ENCODE measurements at regions of chr3 and their contacts with region 1.

Region 1: DNA sequence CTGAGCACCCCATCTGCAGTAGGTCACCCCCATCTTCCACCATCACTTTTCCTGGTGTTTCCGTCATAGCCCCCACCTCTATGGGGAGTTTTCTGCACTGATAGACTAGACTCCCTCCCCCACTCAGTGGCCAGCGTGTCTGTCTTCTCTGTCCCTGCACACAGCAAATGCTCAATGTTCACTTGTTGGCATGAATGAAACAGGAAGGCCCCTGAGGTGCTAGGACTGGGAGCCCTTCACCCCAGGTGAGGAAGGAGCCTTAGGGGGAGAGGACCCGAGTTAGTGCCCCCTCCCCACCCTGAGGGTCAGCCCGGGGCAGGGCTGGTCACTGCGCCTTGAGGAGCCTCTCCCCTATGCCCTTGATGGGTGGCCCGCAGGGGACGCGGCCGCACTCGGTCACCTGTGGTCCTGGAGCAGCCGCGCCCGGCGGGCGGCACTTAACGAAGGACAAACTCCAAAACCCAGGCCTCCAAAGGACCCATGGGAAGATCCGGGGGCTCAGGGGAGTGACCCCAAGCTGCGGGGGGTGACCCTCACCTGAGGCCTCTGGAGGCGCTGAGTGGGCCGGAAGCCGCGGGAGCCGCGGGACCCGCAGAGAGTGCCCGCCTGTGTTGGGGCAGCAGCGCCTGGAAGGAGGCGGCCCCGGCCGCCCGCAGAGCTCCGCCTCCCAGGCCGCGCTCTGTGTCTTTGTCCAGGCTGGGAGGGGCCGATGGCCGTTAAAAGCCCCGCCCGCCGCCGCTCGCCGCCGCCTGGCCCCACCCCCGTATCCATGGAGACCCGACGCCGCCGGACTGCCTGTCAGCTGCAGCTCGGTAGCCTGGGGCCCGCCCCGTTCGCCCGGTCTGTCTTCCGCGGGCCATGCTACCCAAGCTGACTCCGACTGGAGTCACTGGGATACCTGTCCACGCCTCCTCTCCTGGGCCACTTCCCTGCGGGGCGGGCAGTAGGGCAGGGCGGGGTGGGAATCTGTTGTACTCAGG is 15.5 kb upstream of the FANCD2 start:
- DNase-seq: peak; percentile 86
- ATAC-seq: peak; percentile 86
- H3K4me3 ChIP-seq: peak overlapping the region in 4 of 5 experiments; percentile 46 to 64 (median 57)
- H3K4me3 Mint-ChIP-seq: peak overlapping the region; percentile 85
- H3K27ac ChIP-seq: no peak overlapping the region
- H3K27ac Mint-ChIP-seq: no peak overlapping the region
- H3K4me1 ChIP-seq: peaks cover 14 to 29% of the 10 kb centered on the region in 2 donors
- H3K4me1 Mint-ChIP-seq: peaks cover 20% of the 10 kb centered on the region
- H3K27me3 ChIP-seq: no peaks in the 10 kb centered on the region
- H3K27me3 Mint-ChIP-seq: no peaks in the 10 kb centered on the region
- CTCF ChIP-seq: no peak

Region 2: DNA sequence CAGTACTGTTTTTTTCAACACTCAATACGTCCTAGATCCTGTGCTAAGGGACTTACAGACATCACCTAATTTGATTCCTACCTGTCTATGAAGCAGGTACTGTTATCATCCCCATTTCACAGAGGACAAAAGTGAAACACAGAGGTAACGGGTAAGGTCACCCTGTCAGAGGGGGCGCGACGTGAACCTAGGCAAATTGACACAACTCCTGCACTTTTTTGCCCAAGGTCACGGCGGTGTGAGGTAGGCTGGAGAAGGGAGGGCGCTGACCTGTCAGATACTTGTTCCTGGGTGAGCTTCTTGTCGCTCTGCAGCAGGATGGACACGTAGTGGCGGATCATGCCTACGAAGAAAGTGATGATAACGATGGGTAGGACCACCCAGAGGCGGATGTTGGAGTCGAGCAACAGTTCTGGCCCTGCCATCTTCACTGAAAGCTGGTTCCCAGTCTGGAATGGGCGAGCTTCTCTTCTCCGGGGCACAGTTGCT is 24.5 kb before region 1 on chr3:
- CTCF ChIA-PET with region 1: no interaction called
- POLR2A ChIA-PET with region 1: interaction called, 7 read pairs
- intact Hi-C with region 1: loop called (anchors 1 kb)
- DNase-seq: no peak
- ATAC-seq: peak; percentile 28
- H3K4me3 ChIP-seq: peak overlapping the region; percentile 71 to 96 (median 82)
- H3K4me3 Mint-ChIP-seq: peak overlapping the region; percentile 98
- H3K27ac ChIP-seq: peak overlapping the region; percentile 88 to 97
- H3K27ac Mint-ChIP-seq: peak overlapping the region; percentile 100
- H3K4me1 ChIP-seq: peaks cover 16 to 22% of the 10 kb centered on the region in 2 donors
- H3K4me1 Mint-ChIP-seq: peaks cover 28% of the 10 kb centered on the region
- H3K27me3 ChIP-seq: no peaks in the 10 kb centered on the region
- H3K27me3 Mint-ChIP-seq: no peaks in the 10 kb centered on the region
- CTCF ChIP-seq: no peak

Region 3: GRCh38 chr3:10026084-10026890 is 15.5 kb after region 1 on chr3 and contains the start of gene FANCD2:
- CTCF ChIA-PET with region 1: no interaction called
- POLR2A ChIA-PET with region 1: interaction called, 3 read pairs
- intact Hi-C with region 1: loop called (anchors 1 kb)
- DNase-seq: peak; percentile 96
- ATAC-seq: peak; percentile 83
- H3K4me3 ChIP-seq: peak within 1 kb of the TSS; percentile 83 to 94 (median 91)
- H3K4me3 Mint-ChIP-seq: peak within 1 kb of the TSS; percentile 99
- H3K27ac ChIP-seq: peak within 1 kb of the TSS; percentile 94 to 96
- H3K27ac Mint-ChIP-seq: peak within 1 kb of the TSS; percentile 96
- H3K4me1 ChIP-seq: peaks cover 18 to 23% of the 10 kb centered on the region in 2 donors
- H3K4me1 Mint-ChIP-seq: peaks cover 34% of the 10 kb centered on the region
- H3K27me3 ChIP-seq: no peaks in the 10 kb centered on the region
- H3K27me3 Mint-ChIP-seq: no peaks in the 10 kb centered on the region
- CTCF ChIP-seq: no peak
- total RNA-seq, gene FANCD2: 31.7 and 35.5 TPM in 2 replicates

Region 4: GRCh38 chr3:10108091-10108490 is 97.3 kb after region 1 on chr3 and contains the start of gene FANCD2OS:
- CTCF ChIA-PET with region 1: no interaction called
- POLR2A ChIA-PET with region 1: no interaction called
- intact Hi-C with region 1: no loop called
- DNase-seq: no peak
- ATAC-seq: no peak
- H3K4me3 ChIP-seq: no peak within 1 kb of the TSS
- H3K4me3 Mint-ChIP-seq: no peak within 1 kb of the TSS
- H3K27ac ChIP-seq: no peak within 1 kb of the TSS
- H3K27ac Mint-ChIP-seq: no peak within 1 kb of the TSS
- H3K4me1 ChIP-seq: no peaks in the 10 kb centered on the region
- H3K4me1 Mint-ChIP-seq: no peaks in the 10 kb centered on the region
- H3K27me3 ChIP-seq: no peaks in the 10 kb centered on the region
- H3K27me3 Mint-ChIP-seq: peaks cover 2% of the 10 kb centered on the region
- CTCF ChIP-seq: no peak
- total RNA-seq, gene FANCD2OS: not detected in 2 replicates

Region 5: DNA sequence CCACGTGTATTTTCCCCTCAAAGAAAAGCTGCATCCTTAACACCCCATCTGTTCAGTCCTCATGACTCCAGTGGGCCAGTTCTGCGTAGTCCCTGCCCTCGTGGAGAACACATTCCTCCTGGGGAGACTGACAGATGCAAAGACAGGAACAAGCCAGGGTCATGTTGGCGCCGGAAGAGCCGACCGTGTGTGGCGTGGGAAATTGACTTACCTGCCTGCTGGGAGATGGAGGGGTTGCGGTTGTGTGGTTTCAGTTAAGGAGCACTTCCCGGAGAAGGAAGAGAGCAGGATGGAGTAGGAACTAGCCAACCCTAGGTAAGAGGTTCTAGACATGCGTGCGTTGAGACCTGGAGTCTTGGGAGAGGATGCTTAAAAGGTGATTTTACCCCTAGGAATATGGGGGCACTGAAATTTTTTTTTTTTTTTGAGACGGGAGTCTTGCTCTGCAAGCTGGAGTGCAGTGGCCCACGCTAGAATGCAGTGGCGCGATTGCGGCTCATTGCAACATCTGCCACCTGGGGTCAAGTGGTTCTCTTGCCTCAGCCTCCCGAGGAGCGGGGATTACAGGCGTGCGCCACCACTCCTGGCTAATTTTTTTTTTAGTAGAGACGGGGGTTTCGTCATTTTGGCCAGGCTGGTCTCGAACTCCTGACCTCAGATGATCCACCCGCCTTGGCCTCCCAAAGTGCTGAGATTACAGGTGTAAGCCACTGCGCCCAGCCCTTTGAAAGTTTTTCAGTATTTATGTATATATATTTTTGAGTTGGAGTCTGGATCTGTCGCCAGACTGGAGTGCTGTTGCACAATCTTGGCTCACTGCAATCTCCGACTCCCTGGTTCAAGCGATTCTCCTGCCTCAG is 132.2 kb after region 1 on chr3:
- CTCF ChIA-PET with region 1: no interaction called
- POLR2A ChIA-PET with region 1: no interaction called
- intact Hi-C with region 1: loop called (anchors 1 kb)
- DNase-seq: peak; percentile 31
- ATAC-seq: no peak
- H3K4me3 ChIP-seq: peak overlapping the region; percentile 8 to 91 (median 77)
- H3K4me3 Mint-ChIP-seq: peak overlapping the region; percentile 95
- H3K27ac ChIP-seq: peak overlapping the region; percentile 88 to 96
- H3K27ac Mint-ChIP-seq: peak overlapping the region; percentile 97
- H3K4me1 ChIP-seq: peaks cover 28 to 50% of the 10 kb centered on the region in 2 donors
- H3K4me1 Mint-ChIP-seq: peaks cover 32% of the 10 kb centered on the region
- H3K27me3 ChIP-seq: no peaks in the 10 kb centered on the region
- H3K27me3 Mint-ChIP-seq: no peaks in the 10 kb centered on the region
- CTCF ChIP-seq: no peak

Region 6: GRCh38 chr3:11211531-11212298 is 1200.9 kb after region 1 on chr3:
- CTCF ChIA-PET with region 1: no interaction called
- POLR2A ChIA-PET with region 1: no interaction called
- intact Hi-C with region 1: no loop called
- DNase-seq: no peak
- ATAC-seq: no peak
- H3K4me3 ChIP-seq: no peak overlapping the region
- H3K4me3 Mint-ChIP-seq: no peak overlapping the region
- H3K27ac ChIP-seq: no peak overlapping the region
- H3K27ac Mint-ChIP-seq: no peak overlapping the region
- H3K4me1 ChIP-seq: no peaks in the 10 kb centered on the region
- H3K4me1 Mint-ChIP-seq: no peaks in the 10 kb centered on the region
- H3K27me3 ChIP-seq: no peaks in the 10 kb centered on the region
- H3K27me3 Mint-ChIP-seq: peaks cover 21% of the 10 kb centered on the region
- CTCF ChIP-seq: no peak